Activated naive CD4-positive, alpha-beta T cell treated with anti-CD3 and anti-CD28 coated beads for 36 hours (primary cell): ENCODE measurements at regions of chr12 and their contacts with region 1.

Region 1: DNA sequence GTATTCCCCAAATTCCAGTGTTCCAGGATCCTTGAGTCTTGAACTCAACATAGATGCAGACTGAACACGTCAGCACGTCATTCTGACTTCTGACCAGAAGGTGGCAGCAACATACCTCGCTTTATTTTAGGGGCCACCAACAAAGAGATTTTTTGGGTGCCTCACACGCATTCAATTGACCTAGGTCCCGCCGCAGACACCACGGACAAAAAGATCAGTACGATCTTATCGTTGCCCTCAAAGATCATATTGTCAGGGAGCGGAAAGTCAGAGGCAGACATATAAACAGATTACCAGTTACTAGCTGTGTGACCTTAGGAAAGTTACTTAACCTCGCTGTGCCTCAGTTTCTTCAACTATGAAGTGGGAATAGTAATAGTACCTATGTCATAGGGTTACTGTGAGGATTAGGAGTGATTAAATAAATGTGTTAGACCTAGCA is 6.5 kb upstream of the PRPH start:
- DNase-seq: peak; percentile 82
- H3K4me3 Mint-ChIP-seq: no peak overlapping the region
- H3K27ac Mint-ChIP-seq: no peak overlapping the region
- H3K4me1 Mint-ChIP-seq: no peaks in the 10 kb centered on the region
- H3K27me3 Mint-ChIP-seq: peaks cover 17% of the 10 kb centered on the region

Region 2: DNA sequence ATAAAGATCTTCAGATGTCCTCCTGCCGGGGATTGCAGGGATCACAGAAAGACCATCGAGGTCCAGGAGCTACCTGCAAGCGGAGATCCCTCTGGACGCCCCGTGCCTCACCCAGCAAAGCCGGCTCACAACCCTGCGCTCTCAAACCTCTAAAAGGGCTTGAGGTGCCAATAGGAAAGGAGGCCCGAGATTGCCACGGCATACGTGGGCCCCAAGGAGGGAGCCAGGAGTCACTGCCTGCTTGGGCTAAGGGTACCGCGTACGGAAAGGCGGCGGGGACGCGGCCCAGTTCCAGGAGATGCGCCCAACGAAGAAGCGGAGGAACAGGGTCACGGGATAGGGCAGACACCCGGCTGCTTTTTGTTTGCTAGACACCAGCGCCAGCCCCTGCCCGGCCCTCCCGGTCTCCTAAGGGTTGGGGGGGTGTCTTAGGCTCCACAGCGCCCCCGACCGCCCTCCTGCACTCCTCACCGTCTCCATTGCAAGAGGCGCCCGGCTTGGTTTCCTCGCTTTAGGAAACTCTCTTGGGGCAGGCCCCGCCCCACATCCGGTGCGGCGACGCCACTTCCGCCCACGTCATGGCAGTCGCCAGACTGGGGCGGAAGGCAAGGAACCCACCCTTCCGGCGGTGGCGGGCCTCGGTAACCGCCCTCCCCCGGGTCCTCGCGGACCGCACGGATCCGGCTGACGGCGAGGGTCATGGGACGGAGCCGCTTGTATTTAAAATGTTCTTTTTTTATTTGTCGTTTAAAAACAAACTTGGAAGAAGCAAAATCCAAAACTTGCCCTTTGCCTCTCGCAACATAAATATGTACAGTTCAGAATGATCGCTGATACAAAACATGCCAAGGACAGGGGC is 269.9 kb before region 1 on chr12 and contains the start of gene PRKAG1:
- CTCF ChIA-PET with region 1: no interaction called
- intact Hi-C with region 1: no loop called
- DNase-seq: peak; percentile 96
- H3K4me3 Mint-ChIP-seq: peak within 1 kb of the TSS; percentile 87
- H3K27ac Mint-ChIP-seq: peak within 1 kb of the TSS; percentile 94
- H3K4me1 Mint-ChIP-seq: peaks cover 36% of the 10 kb centered on the region
- H3K27me3 Mint-ChIP-seq: no peaks in the 10 kb centered on the region
- total RNA-seq, gene PRKAG1: 49.4 to 50.9 TPM

Region 3: GRCh38 chr12:49276304-49277014 is 12.0 kb before region 1 on chr12:
- CTCF ChIA-PET with region 1: interaction called, 12 read pairs
- intact Hi-C with region 1: no loop called
- DNase-seq: no peak
- H3K4me3 Mint-ChIP-seq: no peak overlapping the region
- H3K27ac Mint-ChIP-seq: no peak overlapping the region
- H3K4me1 Mint-ChIP-seq: no peaks in the 10 kb centered on the region
- H3K27me3 Mint-ChIP-seq: no peaks in the 10 kb centered on the region

Region 4: DNA sequence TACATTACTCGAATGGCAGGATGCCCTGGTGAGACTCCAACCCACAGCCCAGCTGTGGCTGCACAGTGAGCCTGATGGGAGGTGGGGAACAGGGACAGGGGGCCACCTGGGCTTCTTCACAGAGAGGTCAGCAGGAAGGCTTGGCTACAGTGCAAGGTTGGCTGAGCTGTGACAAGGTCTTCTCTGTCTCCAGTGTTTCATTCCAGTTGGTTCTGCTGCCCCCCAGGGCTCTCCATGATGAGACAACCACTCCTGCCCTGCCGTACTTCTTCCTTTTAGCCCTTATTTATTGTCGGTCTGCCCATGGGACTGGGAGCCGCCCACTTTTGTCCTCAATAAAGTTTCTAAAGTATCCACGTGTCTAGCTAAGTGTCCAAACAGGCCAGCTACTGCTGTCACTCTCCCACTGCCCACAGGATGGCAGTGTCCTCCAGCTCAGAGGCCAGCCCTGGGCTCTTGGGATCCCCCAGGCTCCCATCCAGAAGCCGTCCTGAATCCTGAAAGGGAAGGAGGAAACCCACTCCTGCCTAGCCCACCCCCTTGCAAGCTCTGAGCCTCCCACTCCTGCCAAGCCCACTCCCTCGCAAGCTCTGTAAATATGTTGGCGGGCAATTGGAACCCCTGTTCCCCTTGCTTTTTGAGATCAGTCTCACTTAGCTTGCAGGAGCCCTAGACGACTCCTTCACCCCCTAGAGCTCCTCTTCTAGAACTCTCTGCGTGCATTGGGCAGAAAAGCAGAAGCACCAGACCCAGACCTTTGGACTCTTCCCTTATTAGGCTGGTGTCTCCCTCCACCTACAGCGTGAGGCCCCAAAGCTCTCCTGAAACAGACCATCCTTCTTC is 43.2 kb after region 1 on chr12:
- CTCF ChIA-PET with region 1: interaction called, 66 read pairs
- intact Hi-C with region 1: no loop called
- DNase-seq: no peak
- H3K4me3 Mint-ChIP-seq: no peak overlapping the region
- H3K27ac Mint-ChIP-seq: no peak overlapping the region
- H3K4me1 Mint-ChIP-seq: peaks cover 12% of the 10 kb centered on the region
- H3K27me3 Mint-ChIP-seq: peaks cover 41% of the 10 kb centered on the region

Region 5: GRCh38 chr12:49336645-49337584 is 48.5 kb after region 1 on chr12 and contains the start of gene C1QL4:
- CTCF ChIA-PET with region 1: interaction called, 153 read pairs
- intact Hi-C with region 1: loop called (anchors 1 kb)
- DNase-seq: peak; percentile 90
- H3K4me3 Mint-ChIP-seq: peak within 1 kb of the TSS; percentile 57
- H3K27ac Mint-ChIP-seq: no peak within 1 kb of the TSS
- H3K4me1 Mint-ChIP-seq: peaks cover 25% of the 10 kb centered on the region
- H3K27me3 Mint-ChIP-seq: peaks cover 78% of the 10 kb centered on the region
- total RNA-seq, gene C1QL4: not detected

Region 6: DNA sequence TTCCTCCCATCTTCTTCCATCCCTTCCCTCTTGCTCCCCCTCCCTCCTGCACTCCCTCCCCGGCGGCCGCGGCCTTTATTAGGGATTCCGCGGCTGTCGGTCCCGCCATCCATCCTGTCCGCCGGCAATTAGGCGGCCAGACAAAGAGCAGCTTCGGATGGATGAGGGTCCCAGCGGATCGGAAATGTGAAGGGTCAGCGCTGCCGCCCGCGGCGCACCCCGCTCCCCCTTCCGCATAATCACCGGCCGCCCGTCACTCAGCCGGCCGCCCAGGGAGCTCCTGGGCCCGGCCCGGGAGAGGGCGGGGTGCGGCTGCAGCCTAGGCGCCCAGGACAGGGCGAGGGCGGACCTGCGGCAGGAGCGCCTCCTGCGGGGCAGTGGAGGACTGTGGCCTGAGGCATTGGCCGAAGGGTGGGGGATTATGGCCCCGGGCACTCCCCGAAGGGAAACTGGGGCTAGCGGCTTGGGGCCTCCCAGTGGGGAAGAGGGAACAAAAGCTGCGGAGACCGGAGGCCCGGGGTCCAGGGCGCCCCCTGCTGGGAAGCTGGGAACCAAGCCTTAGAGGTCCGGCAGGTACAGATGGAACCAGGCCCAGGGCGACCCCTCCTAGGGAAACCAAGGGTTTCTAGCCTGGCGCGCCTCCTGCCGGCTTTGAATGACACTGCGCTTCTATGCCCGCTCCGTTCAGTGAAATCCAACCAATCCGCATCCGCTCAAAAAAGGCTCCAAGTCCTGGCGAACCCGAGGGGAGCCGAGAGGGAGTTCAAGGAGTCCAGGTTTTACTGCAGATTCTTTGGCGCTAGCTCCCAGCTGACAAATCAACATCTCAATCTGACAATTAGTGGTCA is 53.9 kb after region 1 on chr12:
- CTCF ChIA-PET with region 1: interaction called, 153 read pairs
- intact Hi-C with region 1: loop called (anchors 1 kb)
- DNase-seq: peak; percentile 90
- H3K4me3 Mint-ChIP-seq: no peak overlapping the region
- H3K27ac Mint-ChIP-seq: no peak overlapping the region
- H3K4me1 Mint-ChIP-seq: peaks cover 48% of the 10 kb centered on the region
- H3K27me3 Mint-ChIP-seq: peaks cover 78% of the 10 kb centered on the region

Region 7: GRCh38 chr12:49347384-49348237 is 59.2 kb after region 1 on chr12:
- CTCF ChIA-PET with region 1: interaction called, 153 read pairs
- intact Hi-C with region 1: loop called (anchors 1 kb)
- DNase-seq: peak; percentile 77
- H3K4me3 Mint-ChIP-seq: peak overlapping the region; percentile 58
- H3K27ac Mint-ChIP-seq: no peak overlapping the region
- H3K4me1 Mint-ChIP-seq: peaks cover 41% of the 10 kb centered on the region
- H3K27me3 Mint-ChIP-seq: peaks cover 58% of the 10 kb centered on the region

Region 8: DNA sequence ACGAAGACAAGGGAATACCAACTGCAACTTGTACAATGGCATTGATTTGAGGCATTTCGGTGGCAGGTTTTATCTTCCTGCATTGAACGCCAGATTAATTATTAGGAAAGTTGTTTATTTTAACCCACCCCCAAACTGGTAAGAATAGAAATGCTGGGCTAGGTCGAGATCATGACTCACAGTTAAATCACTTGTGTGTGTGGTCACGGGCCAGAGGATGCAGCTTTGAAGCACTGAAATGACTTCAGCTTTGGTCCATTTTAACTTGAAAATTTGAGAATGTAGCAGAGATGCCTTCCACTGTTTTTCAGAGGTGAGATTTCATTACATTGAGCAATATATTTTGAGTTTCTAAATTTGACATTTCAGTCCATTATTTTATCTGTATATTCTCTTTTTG is 226.8 kb after region 1 on chr12:
- CTCF ChIA-PET with region 1: interaction called, 20 read pairs
- intact Hi-C with region 1: loop called (anchors 1 kb)
- DNase-seq: no peak
- H3K4me3 Mint-ChIP-seq: no peak overlapping the region
- H3K27ac Mint-ChIP-seq: no peak overlapping the region
- H3K4me1 Mint-ChIP-seq: peaks cover 9% of the 10 kb centered on the region
- H3K27me3 Mint-ChIP-seq: no peaks in the 10 kb centered on the region